Psoas muscle (tissue), 8 donors: ENCODE measurements at regions of chr19 and their contacts with region 1.

Region 1: GRCh38 chr19:15091901-15092753 is 10.1 kb downstream of the OR1I1 start:
- DNase-seq: no peak
- ATAC-seq: peak in 1 of 4 donors; percentile 60
- H3K4me3 ChIP-seq: no peak overlapping the region
- H3K27ac ChIP-seq: no peak overlapping the region
- H3K4me1 ChIP-seq: no peaks in the 10 kb centered on the region
- H3K27me3 ChIP-seq: peaks cover 0 to 5% (median 0%) of the 10 kb centered on the region in 3 donors
- CTCF ChIP-seq: peak; percentile 72

Region 2: GRCh38 chr19:15149737-15150136 is 57.6 kb after region 1 on chr19:
- intact Hi-C with region 1: loop called (anchors 2 to 5 kb)
- DNase-seq: no peak
- ATAC-seq: no peak
- H3K4me3 ChIP-seq: no peak overlapping the region
- H3K27ac ChIP-seq: no peak overlapping the region
- H3K4me1 ChIP-seq: no peaks in the 10 kb centered on the region
- H3K27me3 ChIP-seq: no peaks in the 10 kb centered on the region
- CTCF ChIP-seq: no peak